Activated CD4-positive, alpha-beta T cell treated with anti-CD3 and anti-CD28 coated beads for 36 hours (primary cell): ENCODE measurements at regions of chr22 and their contacts with region 1.

Region 1: GRCh38 chr22:28800308-28801077 is at the start of gene XBP1:
- DNase-seq: peak; percentile 93
- ATAC-seq: peak; percentile 85
- H3K4me3 Mint-ChIP-seq: peak within 1 kb of the TSS; percentile 84
- H3K27ac Mint-ChIP-seq: peak within 1 kb of the TSS; percentile 99
- H3K4me1 Mint-ChIP-seq: peaks cover 44% of the 10 kb centered on the region
- H3K27me3 Mint-ChIP-seq: no peaks in the 10 kb centered on the region
- total RNA-seq, gene XBP1: 88.8 to 101 TPM

Region 2: DNA sequence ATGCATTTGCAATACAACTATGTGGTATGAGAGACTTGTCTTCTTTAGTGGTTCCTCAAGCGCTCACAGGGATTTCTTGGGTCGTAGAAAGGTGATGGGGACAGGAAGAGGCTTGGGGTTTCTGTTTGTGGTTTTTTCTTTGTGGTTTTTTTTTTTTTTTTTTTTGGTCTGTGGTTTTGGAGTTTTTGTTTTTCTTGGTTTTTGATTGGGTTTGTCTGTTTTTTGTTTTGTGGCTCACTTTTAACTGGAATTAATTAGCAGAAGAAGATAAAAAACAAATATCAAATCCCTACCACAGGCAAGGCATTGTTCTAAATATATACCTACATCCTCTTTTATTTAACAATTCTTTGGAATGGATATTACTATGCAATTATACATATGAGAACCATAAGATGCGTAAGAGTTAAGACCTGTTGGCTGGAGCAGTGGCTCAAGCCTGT is 126.4 kb before region 1 on chr22:
- CTCF ChIA-PET with region 1: interaction called, 3 read pairs
- POLR2A ChIA-PET with region 1: interaction called, 3 read pairs
- intact Hi-C with region 1: loop called in 1 of 2 experiments (anchors 10 kb)
- DNase-seq: peak; percentile 38
- ATAC-seq: peak; percentile 58
- H3K4me3 Mint-ChIP-seq: peak overlapping the region; percentile 73
- H3K27ac Mint-ChIP-seq: peak overlapping the region; percentile 87
- H3K4me1 Mint-ChIP-seq: peaks cover 25% of the 10 kb centered on the region
- H3K27me3 Mint-ChIP-seq: peaks cover 63% of the 10 kb centered on the region

Region 3: GRCh38 chr22:28741758-28742561 is 58.5 kb before region 1 on chr22 and contains the starts of genes CHEK2 and HSCB:
- CTCF ChIA-PET with region 1: interaction called, 5 read pairs
- POLR2A ChIA-PET with region 1: interaction called, 13 read pairs
- intact Hi-C with region 1: loop called (anchors 1 kb)
- DNase-seq: peak; percentile 99
- ATAC-seq: peak; percentile 93
- H3K4me3 Mint-ChIP-seq: peak within 1 kb of the TSS; percentile 81
- H3K27ac Mint-ChIP-seq: peak within 1 kb of the TSS; percentile 83
- H3K4me1 Mint-ChIP-seq: peaks cover 32% of the 10 kb centered on the region
- H3K27me3 Mint-ChIP-seq: no peaks in the 10 kb centered on the region
- total RNA-seq, gene CHEK2: 37.5 to 41.3 TPM
- total RNA-seq, gene HSCB: 16.5 to 18.5 TPM

Region 4: GRCh38 chr22:28772633-28773460 is 27.6 kb before region 1 on chr22 and contains the start of gene CCDC117:
- CTCF ChIA-PET with region 1: interaction called, 22 read pairs
- POLR2A ChIA-PET with region 1: interaction called, 47 read pairs
- intact Hi-C with region 1: loop called (anchors 1 kb)
- DNase-seq: peak; percentile 96
- ATAC-seq: peak; percentile 91
- H3K4me3 Mint-ChIP-seq: peak within 1 kb of the TSS; percentile 94
- H3K27ac Mint-ChIP-seq: peak within 1 kb of the TSS; percentile 99
- H3K4me1 Mint-ChIP-seq: peaks cover 19% of the 10 kb centered on the region
- H3K27me3 Mint-ChIP-seq: no peaks in the 10 kb centered on the region
- total RNA-seq, gene CCDC117: 36.1 to 36.8 TPM

Region 5: DNA sequence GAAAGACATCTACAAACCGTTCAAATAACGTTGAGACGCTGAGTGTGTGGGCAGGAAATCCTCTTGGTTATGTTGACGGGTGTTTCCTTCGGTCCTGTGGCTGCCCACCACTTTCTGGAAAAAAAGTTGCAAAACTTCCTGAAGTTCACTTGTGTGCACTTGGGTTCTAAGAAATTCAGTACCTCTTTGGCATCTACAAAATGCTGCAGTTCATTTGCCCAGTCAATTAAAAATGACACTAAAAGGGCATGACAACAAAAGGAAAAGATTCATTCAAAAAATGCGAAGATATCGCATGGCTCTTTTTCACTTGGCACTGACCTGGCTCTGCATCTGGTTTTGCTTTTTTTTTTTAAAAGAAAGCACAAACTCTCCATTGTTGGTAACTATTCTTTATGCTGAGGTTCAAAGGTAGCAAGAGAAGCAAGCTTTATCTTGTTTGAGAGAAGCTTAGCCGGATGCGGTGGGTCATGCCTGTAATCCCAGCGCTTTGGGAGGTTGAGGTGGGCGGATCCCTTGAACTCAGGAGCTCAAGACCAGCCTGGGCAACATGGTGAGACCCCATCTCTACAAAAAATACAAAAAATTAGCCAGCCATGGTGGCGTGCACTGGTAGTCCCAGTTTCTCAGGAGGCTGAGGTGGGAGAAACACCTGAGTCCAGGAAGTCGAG is 10.5 kb after region 1 on chr22:
- CTCF ChIA-PET with region 1: interaction called, 10 read pairs
- POLR2A ChIA-PET with region 1: interaction called, 26 read pairs
- intact Hi-C with region 1: loop called (anchors 1 kb)
- DNase-seq: peak; percentile 46
- ATAC-seq: peak; percentile 24
- H3K4me3 Mint-ChIP-seq: peak overlapping the region; percentile 53
- H3K27ac Mint-ChIP-seq: peak overlapping the region; percentile 42
- H3K4me1 Mint-ChIP-seq: peaks cover 53% of the 10 kb centered on the region
- H3K27me3 Mint-ChIP-seq: no peaks in the 10 kb centered on the region

Region 6: DNA sequence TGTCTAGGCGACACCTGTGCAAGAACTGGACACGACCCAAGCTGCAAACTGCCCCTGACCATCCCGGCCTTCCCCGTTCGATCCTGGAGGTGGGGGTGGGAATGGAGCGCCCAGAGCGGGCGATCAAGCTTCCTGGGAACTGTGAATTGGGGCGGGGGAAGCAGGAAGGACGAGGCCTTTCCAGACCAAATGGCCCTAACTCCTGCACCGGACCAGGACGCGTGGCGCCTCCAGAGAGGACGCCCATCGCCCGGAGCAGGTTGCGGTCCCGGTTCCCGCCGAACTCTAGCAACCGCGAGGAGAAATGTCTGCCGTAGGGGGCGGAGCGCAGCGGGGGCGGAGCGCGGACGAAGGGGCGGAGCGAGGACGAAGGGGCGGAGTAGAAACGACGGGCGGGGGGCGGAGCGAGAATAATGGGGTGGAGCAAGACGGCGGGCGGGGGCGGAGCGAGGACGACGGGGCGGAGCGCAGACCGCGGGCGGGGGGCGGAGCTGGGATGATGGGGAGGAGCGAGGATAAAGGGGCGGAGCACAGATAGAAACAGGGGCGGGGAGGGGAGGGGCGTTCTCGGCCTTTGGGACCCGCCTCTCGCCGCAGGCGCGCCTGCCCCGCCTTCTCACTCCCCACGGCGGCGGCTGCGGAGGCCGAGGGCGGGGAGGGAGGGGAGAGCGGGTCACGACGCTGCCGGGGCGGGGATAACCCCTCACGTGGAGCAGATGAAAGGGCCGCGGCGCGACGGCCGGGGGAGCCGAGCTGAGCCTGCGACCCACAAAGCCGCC is 82.6 kb after region 1 on chr22 and contains the start of gene ZNRF3:
- CTCF ChIA-PET with region 1: no interaction called
- POLR2A ChIA-PET with region 1: no interaction called
- intact Hi-C with region 1: loop called in 1 of 2 experiments (anchors 1 kb)
- DNase-seq: peak; percentile 96
- ATAC-seq: peak; percentile 91
- H3K4me3 Mint-ChIP-seq: peak within 1 kb of the TSS; percentile 75
- H3K27ac Mint-ChIP-seq: peak within 1 kb of the TSS; percentile 83
- H3K4me1 Mint-ChIP-seq: peaks cover 18% of the 10 kb centered on the region
- H3K27me3 Mint-ChIP-seq: peaks cover 26% of the 10 kb centered on the region
- total RNA-seq, gene ZNRF3: 2.3 TPM